Sigmoid colon (tissue), 7 donors: ENCODE measurements at regions of chr2 and their contacts with region 1.

Region 1: DNA sequence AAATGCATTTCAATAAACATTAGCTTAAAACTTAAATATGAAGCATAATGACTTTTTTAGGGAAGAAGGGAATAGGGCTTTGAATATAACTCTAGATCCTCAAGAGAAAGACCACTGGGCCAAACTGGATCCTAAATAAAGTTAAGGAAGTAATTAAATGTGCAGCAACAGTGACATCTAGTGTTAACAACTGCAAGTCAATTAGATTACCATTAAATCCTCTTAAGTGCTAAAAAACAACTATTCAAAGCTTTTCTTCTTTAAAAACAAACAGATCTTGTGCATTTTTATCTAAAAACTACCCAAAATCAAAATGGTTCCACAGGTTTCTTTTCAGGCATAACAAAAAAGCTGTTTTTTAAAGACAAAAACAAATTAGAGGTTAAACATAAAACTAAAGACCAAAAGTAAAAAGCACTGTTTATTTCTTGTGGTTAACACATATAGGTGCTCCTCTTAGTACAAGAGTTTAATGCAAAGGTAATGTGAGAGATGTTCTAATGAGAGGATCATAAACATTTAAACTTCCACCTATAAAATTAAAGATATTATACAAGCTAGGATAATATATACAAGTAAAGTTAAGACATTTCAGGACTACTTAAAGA is 111.4 kb downstream of the THADA start:
- DNase-seq: no peak
- H3K4me3 ChIP-seq: no peak overlapping the region
- H3K27ac ChIP-seq: peak overlapping the region; percentile 68 to 80 (median 76)
- H3K4me1 ChIP-seq: peaks cover 0 to 41% (median 29%) of the 10 kb centered on the region in 4 donors
- H3K27me3 ChIP-seq: no peaks in the 10 kb centered on the region
- CTCF ChIP-seq: peak; percentile 43 to 75 (median 66)
- EP300 ChIP-seq: no peak
- POLR2A ChIP-seq: no peak

Region 2: GRCh38 chr2:42947809-42948600 is 536.4 kb before region 1 on chr2:
- intact Hi-C with region 1: loop called (anchors 2 kb)
- DNase-seq: no peak
- H3K4me3 ChIP-seq: no peak overlapping the region
- H3K27ac ChIP-seq: no peak overlapping the region
- H3K4me1 ChIP-seq: peaks cover 0 to 9% (median 7%) of the 10 kb centered on the region in 4 donors
- H3K27me3 ChIP-seq: no peaks in the 10 kb centered on the region
- CTCF ChIP-seq: no peak
- EP300 ChIP-seq: no peak
- POLR2A ChIP-seq: no peak

Region 3: DNA sequence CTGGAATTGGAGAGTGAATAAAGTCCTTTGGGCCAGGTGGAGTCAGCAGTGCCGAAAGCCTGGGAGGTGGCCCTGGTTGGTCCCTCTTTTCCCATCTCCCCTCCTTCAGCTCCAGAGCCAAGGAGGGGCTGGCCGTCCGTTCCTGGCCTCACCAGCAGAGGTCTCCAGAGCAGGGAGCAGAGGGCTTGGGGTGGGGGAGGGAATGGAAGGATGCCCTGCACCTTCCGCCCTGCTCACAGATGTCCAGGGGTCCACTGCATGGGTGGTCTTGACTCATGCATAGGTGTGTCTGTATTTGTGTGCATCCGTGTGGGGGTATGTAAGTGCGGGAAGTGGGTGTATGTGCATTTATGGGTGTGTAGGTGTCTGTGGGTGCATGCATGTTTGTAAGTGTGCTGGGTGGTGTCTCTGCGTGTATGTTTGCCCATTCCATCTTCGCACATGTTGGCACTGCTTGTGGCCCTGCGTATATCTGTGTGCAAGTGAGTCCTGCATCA is 459.9 kb before region 1 on chr2:
- intact Hi-C with region 1: loop called (anchors 5 kb)
- DNase-seq: peak; percentile 87
- H3K4me3 ChIP-seq: no peak overlapping the region
- H3K27ac ChIP-seq: peak overlapping the region in 2 of 4 donors; percentile 17 to 48
- H3K4me1 ChIP-seq: peaks cover 0 to 15% (median 11%) of the 10 kb centered on the region in 4 donors
- H3K27me3 ChIP-seq: no peaks in the 10 kb centered on the region
- CTCF ChIP-seq: peak; percentile 86 to 95 (median 90)
- EP300 ChIP-seq: no peak
- POLR2A ChIP-seq: no peak

Region 4: DNA sequence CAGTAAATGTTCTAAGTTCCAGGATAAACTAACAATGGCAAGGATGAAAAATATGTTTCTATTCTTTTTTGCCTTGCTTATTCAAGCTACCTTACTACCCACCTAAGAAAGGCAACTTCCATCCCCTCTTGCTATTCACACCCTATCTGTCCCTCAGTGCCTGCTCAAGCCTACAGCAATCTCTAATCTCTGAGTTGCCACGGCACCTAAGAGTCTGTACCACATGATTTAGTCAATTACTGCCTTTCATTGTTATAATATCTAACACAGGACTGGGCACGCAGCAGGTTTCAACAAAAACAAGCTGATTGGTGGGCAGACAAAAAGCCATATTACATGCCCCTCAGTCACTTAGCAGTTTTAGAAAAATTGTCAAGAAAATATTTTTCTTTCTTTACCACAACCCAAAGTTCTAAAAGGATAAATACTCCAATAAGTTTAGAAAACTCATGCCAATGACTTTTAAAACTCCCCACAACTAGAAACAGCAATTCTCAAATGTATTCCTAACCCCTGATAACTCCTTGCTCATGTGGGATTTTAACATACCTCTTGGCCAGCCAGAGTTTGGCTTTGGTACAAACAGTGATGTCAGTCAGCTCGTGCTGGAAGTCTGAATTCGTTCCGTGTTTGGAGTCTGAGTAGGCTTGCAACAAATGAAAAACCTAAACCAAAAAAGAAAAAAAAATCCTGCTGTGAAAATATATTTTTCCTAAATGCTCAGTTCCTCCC is 140.7 kb before region 1 on chr2:
- intact Hi-C with region 1: loop called (anchors 5 kb)
- DNase-seq: peak; percentile 94
- H3K4me3 ChIP-seq: no peak overlapping the region
- H3K27ac ChIP-seq: peak overlapping the region; percentile 85 to 92 (median 86)
- H3K4me1 ChIP-seq: peaks cover 0 to 90% (median 88%) of the 10 kb centered on the region in 4 donors
- H3K27me3 ChIP-seq: no peaks in the 10 kb centered on the region
- CTCF ChIP-seq: no peak
- EP300 ChIP-seq: peak in 1 of 4 donors; percentile 37
- POLR2A ChIP-seq: no peak

Region 5: GRCh38 chr2:43542285-43542937 is 58.0 kb after region 1 on chr2:
- intact Hi-C with region 1: no loop called
- DNase-seq: no peak
- H3K4me3 ChIP-seq: no peak overlapping the region
- H3K27ac ChIP-seq: no peak overlapping the region
- H3K4me1 ChIP-seq: peaks cover 0 to 41% (median 18%) of the 10 kb centered on the region in 4 donors
- H3K27me3 ChIP-seq: no peaks in the 10 kb centered on the region
- CTCF ChIP-seq: peak; percentile 43 to 62 (median 58)
- EP300 ChIP-seq: no peak
- POLR2A ChIP-seq: no peak